ENCODE measurements at regions of chr11 and their contacts with region 1.

Region 1: DNA sequence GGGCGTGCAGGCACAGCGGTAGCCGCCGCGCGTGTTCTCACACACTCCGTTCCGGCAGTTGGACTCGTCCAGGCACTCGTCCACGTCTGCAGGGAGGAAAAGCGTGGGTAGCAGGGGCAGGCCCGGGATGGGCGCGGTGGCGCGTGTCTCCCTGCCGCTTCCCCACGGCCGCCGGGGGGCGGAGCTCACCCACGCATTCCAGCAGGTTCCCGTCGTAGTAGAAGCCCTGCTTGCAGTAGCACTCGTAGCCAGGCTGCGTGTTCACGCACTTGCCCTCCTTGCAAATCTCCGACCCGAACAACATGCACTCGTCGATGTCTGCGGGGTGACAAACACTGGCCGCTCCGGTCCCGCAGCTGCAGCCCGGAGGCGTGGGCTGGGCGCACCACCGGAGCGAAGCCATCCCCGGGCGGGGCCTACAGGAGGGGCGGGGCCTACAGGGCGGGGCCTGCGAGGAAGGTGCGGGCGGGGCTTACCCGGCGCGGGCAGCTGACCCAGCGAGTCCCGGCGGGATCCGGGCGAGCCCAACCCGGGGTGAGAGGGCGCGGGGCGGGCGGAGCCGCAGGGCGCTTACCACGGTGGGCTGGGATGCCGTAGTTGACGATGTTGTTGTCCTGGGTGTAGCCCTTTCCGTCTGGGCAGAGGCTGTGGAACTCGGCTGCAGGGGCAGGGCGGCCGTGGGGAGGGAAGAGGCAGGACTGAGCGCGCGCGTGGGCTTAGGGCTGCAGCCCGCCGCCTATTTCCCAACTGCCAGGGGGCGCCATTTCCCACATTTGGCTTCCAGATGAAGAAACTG is 15.6 kb downstream of the SCYL1 start:
- DNase-seq: no peak
- ATAC-seq: peak; percentile 83
- H3K4me3 ChIP-seq: peak overlapping the region; percentile 64 to 68
- H3K27ac ChIP-seq: peak overlapping the region; percentile 79
- H3K4me1 ChIP-seq: peaks cover 18% of the 10 kb centered on the region
- H3K27me3 ChIP-seq: no peaks in the 10 kb centered on the region
- CTCF ChIP-seq: peak; percentile 90; the same call in 1 of the 2 replicates

Region 2: GRCh38 chr11:65429724-65430405 is 110.6 kb before region 1 on chr11:
- CTCF ChIA-PET with region 1: no interaction called
- POLR2A ChIA-PET with region 1: no interaction called
- in situ Hi-C with region 1: no loop called
- intact Hi-C with region 1: no loop called
- DNase-seq: no peak
- ATAC-seq: peak; percentile 37
- H3K4me3 ChIP-seq: peak overlapping the region; percentile 43 to 99
- H3K27ac ChIP-seq: peak overlapping the region; percentile 100
- H3K4me1 ChIP-seq: peaks cover 76% of the 10 kb centered on the region
- H3K27me3 ChIP-seq: no peaks in the 10 kb centered on the region
- CTCF ChIP-seq: no peak

Region 3: GRCh38 chr11:65524014-65524740 is 16.3 kb before region 1 on chr11:
- CTCF ChIA-PET with region 1: interaction called, 10 read pairs
- POLR2A ChIA-PET with region 1: interaction called, 3 read pairs
- in situ Hi-C with region 1: no loop called
- intact Hi-C with region 1: no loop called
- DNase-seq: no peak
- ATAC-seq: peak; percentile 19
- H3K4me3 ChIP-seq: peak overlapping the region; percentile 5 to 39; a peak in 3 of 4 replicates
- H3K27ac ChIP-seq: 0 out of 2 replicates have a peak overlapping the region, but pooled peaks have one; percentile 15
- H3K4me1 ChIP-seq: peaks cover 5% of the 10 kb centered on the region; the same call in 1 of the 2 replicates
- H3K27me3 ChIP-seq: no peaks in the 10 kb centered on the region
- CTCF ChIP-seq: no peak

Region 4: GRCh38 chr11:65551572-65552398 is 11.3 kb after region 1 on chr11:
- CTCF ChIA-PET with region 1: interaction called, 22 read pairs
- POLR2A ChIA-PET with region 1: no interaction called
- in situ Hi-C with region 1: no loop called
- intact Hi-C with region 1: no loop called
- DNase-seq: no peak
- ATAC-seq: peak; percentile 80
- H3K4me3 ChIP-seq: no peak overlapping the region
- H3K27ac ChIP-seq: no peak overlapping the region
- H3K4me1 ChIP-seq: peaks cover 48% of the 10 kb centered on the region
- H3K27me3 ChIP-seq: no peaks in the 10 kb centered on the region
- CTCF ChIP-seq: peak; percentile 96; the same call in 1 of the 2 replicates

Region 5: GRCh38 chr11:65569973-65570918 is 29.8 kb after region 1 on chr11 and contains the start of gene ZNRD2:
- CTCF ChIA-PET with region 1: interaction called, 18 read pairs
- POLR2A ChIA-PET with region 1: no interaction called
- in situ Hi-C with region 1: no loop called
- intact Hi-C with region 1: loop called (anchors 1 kb)
- DNase-seq: peak; percentile 94
- ATAC-seq: peak; percentile 82
- H3K4me3 ChIP-seq: peak within 1 kb of the TSS; percentile 82 to 93
- H3K27ac ChIP-seq: peak within 1 kb of the TSS; percentile 94
- H3K4me1 ChIP-seq: peaks cover 25% of the 10 kb centered on the region
- H3K27me3 ChIP-seq: no peaks in the 10 kb centered on the region
- CTCF ChIP-seq: peak; percentile 27; the same call in 1 of the 2 replicates
- total RNA-seq, gene ZNRD2: 61.2 TPM

Region 6: DNA sequence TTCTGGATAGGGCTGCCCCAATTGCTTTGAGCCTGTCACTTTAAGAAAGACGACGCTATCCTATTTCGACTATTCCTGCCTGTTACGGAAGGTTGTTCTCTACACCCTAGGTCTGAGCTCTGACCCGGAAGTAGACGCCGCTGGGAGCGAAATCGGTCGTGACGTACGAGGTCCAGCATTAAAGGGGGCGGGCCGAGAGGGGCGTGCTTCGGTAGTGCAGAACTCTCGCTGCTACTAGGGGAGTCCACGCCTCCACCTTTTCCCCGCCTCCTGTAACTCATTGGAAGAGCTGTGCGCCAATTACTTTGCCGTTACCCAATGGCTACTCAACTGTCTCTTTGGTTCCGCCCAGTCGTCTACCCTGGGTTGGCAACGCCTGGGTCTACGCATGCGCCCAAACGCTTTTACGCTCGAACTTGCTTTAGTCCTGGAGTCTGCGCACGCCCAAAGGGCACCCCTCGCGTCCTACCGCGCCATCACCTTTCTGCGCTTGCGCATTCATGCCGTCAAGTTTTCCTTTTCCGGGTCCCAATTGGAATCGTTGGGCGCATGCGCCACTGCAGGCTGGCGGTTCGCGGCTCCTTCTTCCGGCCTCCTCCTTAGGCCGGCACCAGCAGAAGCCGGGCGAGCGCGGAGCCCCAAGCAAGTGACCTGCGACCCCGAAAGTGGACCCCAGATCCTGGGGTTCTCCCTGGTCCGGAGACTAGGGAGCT is 74.9 kb after region 1 on chr11 and contains the start of gene PCNX3:
- CTCF ChIA-PET with region 1: no interaction called
- POLR2A ChIA-PET with region 1: no interaction called
- in situ Hi-C with region 1: no loop called
- intact Hi-C with region 1: no loop called
- DNase-seq: peak; percentile 100
- ATAC-seq: peak; percentile 88
- H3K4me3 ChIP-seq: peak within 1 kb of the TSS; percentile 88 to 97
- H3K27ac ChIP-seq: peak within 1 kb of the TSS; percentile 92
- H3K4me1 ChIP-seq: peaks cover 40% of the 10 kb centered on the region
- H3K27me3 ChIP-seq: no peaks in the 10 kb centered on the region
- CTCF ChIP-seq: no peak
- total RNA-seq, gene PCNX3: 74.5 TPM

Region 7: DNA sequence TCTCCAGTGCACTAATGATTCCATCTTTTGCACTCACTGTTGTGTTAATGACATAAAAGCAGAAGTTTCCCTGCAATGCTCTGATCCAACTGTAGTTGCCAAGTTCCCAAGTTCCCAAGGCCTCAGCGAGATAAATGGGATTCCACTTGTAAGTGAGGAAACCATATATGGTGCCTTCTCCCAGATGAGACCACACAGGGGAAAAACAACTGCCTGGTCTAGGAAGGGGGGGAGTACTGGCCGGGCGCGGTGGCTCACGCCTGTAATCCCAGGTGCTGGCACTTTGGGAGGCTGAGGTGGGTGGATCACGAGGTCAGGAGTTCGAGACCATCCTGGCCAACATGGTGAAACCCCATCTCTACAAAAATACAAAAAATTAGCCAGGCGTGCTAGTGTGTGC is 145.5 kb after region 1 on chr11:
- CTCF ChIA-PET with region 1: no interaction called
- POLR2A ChIA-PET with region 1: no interaction called
- in situ Hi-C with region 1: no loop called
- intact Hi-C with region 1: no loop called
- DNase-seq: no peak
- ATAC-seq: no peak
- H3K4me3 ChIP-seq: no peak overlapping the region
- H3K27ac ChIP-seq: no peak overlapping the region
- H3K4me1 ChIP-seq: no peaks in the 10 kb centered on the region
- H3K27me3 ChIP-seq: no peaks in the 10 kb centered on the region
- CTCF ChIP-seq: no peak